ENCODE measurements at regions of chr19 and their contacts with region 1.

Region 1: DNA sequence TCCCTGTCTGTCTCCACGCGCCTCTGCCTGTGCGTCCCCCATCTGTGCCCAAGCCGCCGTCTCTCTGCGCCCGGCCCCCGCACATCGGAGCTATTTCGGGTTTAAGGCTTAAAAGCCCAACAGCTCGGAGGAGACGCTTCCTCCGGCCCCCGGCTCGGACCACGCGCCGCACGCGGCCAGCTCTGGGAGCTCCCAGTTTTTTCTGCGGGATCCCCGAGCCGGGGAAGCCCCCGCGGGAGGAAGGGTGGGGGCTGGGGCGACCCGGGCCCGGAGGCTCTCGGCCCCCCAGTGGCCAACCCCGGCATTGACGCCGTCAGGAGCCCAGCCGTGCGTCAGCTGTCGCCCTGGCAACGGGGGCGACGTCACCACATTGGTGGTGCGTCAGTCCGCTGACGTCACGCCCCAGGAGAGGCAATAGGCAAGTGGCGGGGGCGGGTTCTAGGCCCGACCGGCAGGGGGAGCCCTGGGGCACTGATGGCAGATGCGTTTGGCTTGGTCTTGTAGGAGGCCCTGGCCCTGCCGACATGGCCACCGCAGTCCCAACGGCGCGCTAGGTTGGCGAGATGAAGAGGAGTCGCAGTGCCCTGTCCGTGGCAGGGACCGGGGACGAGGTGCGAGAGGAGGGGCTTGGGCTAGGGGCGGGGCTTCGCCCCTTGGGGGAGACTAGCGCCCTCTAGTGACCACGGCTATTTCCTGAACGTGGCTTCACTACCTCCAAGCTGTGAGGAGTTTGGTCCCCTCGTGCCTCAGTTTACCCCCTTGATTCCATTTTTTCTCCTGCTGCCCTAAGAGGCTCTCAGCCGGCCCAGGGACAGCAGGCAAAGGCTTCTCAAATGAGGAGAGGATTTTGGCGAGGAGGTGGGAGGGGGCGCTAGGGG is 3.7 kb upstream of the PDE4A start:
- DNase-seq: peak; percentile 94 to 97 (median 95)
- H3K4me3 ChIP-seq: peak overlapping the region; percentile 1 to 64 (median 34)
- H3K4me3 Mint-ChIP-seq: peak overlapping the region; percentile 67 to 87
- H3K27ac ChIP-seq: peak overlapping the region; percentile 38 to 52
- H3K27ac Mint-ChIP-seq: peak overlapping the region; percentile 84 to 96 (median 93)
- H3K4me1 ChIP-seq: peaks cover 58 to 67% of the 10 kb centered on the region in 2 donors
- H3K4me1 Mint-ChIP-seq: peaks cover 57% of the 10 kb centered on the region
- H3K27me3 ChIP-seq: peaks cover 33 to 54% of the 10 kb centered on the region in 2 donors
- H3K27me3 Mint-ChIP-seq: peaks cover 47 to 59% (median 53%) of the 10 kb centered on the region in 3 donors
- CTCF ChIP-seq: peak; percentile 100

Region 2: GRCh38 chr19:10339380-10339960 is 77.1 kb before region 1 on chr19 and contains the start of gene ICAM3:
- intact Hi-C with region 1: no loop called
- DNase-seq: peak; percentile 54 to 73 (median 66)
- H3K4me3 ChIP-seq: peak within 1 kb of the TSS; percentile 66 to 93 (median 70)
- H3K4me3 Mint-ChIP-seq: peak within 1 kb of the TSS; percentile 90 to 99
- H3K27ac ChIP-seq: peak within 1 kb of the TSS; percentile 61 to 91
- H3K27ac Mint-ChIP-seq: peak within 1 kb of the TSS; percentile 90 to 98 (median 94)
- H3K4me1 ChIP-seq: peaks cover 38 to 45% of the 10 kb centered on the region in 2 donors
- H3K4me1 Mint-ChIP-seq: peaks cover 37% of the 10 kb centered on the region
- H3K27me3 ChIP-seq: no peaks in the 10 kb centered on the region
- H3K27me3 Mint-ChIP-seq: peaks cover 0 to 5% (median 2%) of the 10 kb centered on the region in 3 donors
- CTCF ChIP-seq: no peak
- polyA plus RNA-seq, gene ICAM3: 189 to 234 (median 198) TPM

Region 3: GRCh38 chr19:10431943-10432735 is 15.5 kb after region 1 on chr19:
- intact Hi-C with region 1: loop called (anchors 2 kb)
- DNase-seq: peak; percentile 52 to 74 (median 69)
- H3K4me3 ChIP-seq: peak overlapping the region; percentile 43 to 77 (median 51)
- H3K4me3 Mint-ChIP-seq: peak overlapping the region; percentile 87 to 96
- H3K27ac ChIP-seq: peak overlapping the region; percentile 62 to 78
- H3K27ac Mint-ChIP-seq: peak overlapping the region; percentile 88 to 98 (median 96)
- H3K4me1 ChIP-seq: peaks cover 41 to 50% of the 10 kb centered on the region in 2 donors
- H3K4me1 Mint-ChIP-seq: peaks cover 60% of the 10 kb centered on the region
- H3K27me3 ChIP-seq: peaks cover 3 to 33% of the 10 kb centered on the region in 2 donors
- H3K27me3 Mint-ChIP-seq: peaks cover 40 to 60% (median 51%) of the 10 kb centered on the region in 3 donors
- CTCF ChIP-seq: no peak

Region 4: GRCh38 chr19:10450853-10451609 is 34.4 kb after region 1 on chr19:
- intact Hi-C with region 1: no loop called
- DNase-seq: no peak
- H3K4me3 ChIP-seq: no peak overlapping the region
- H3K4me3 Mint-ChIP-seq: no peak overlapping the region
- H3K27ac ChIP-seq: no peak overlapping the region
- H3K27ac Mint-ChIP-seq: no peak overlapping the region
- H3K4me1 ChIP-seq: peaks cover 0 to 4% of the 10 kb centered on the region in 2 donors
- H3K4me1 Mint-ChIP-seq: peaks cover 10% of the 10 kb centered on the region
- H3K27me3 ChIP-seq: peaks cover 0 to 5% of the 10 kb centered on the region in 2 donors
- H3K27me3 Mint-ChIP-seq: peaks cover 27 to 41% (median 29%) of the 10 kb centered on the region in 3 donors
- CTCF ChIP-seq: no peak

Region 5: DNA sequence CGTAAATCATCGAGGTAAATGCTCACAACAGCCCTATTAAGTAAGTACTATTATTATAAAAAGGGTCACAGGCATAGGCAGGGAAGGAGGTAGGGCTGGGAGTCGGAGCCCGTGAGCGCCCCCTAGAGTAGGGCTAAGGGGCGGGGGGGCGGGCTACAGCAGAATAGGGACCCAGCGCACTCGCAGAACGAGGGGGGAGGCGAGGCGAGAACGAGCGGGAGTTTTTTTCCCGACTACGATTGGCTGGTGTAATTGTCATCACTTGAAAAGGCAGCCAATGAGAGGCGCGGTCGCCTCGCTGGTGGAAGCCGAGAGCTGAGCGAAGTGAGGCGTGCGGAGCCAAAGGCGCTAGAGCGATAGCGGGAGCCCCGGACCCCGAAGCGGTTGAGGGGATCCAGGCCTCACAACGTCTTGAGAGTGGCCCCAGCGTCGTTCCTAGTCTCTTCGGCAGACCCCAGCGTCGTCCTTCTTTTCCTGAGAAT is 62.3 kb after region 1 on chr19:
- intact Hi-C with region 1: no loop called
- DNase-seq: peak; percentile 66 to 85 (median 73)
- H3K4me3 ChIP-seq: peak overlapping the region in 2 of 3 experiments; percentile 25 to 66
- H3K4me3 Mint-ChIP-seq: peak overlapping the region; percentile 80 to 84
- H3K27ac ChIP-seq: no peak overlapping the region
- H3K27ac Mint-ChIP-seq: peak overlapping the region in 3 of 7 donors; percentile 15 to 66 (median 60)
- H3K4me1 ChIP-seq: peaks cover 21 to 22% of the 10 kb centered on the region in 2 donors
- H3K4me1 Mint-ChIP-seq: peaks cover 21% of the 10 kb centered on the region
- H3K27me3 ChIP-seq: peaks cover 0 to 2% of the 10 kb centered on the region in 2 donors
- H3K27me3 Mint-ChIP-seq: peaks cover 9 to 19% (median 11%) of the 10 kb centered on the region in 3 donors
- CTCF ChIP-seq: peak; percentile 83